ENCODE measurements at regions of chr19 and their contacts with region 1.

Region 1: DNA sequence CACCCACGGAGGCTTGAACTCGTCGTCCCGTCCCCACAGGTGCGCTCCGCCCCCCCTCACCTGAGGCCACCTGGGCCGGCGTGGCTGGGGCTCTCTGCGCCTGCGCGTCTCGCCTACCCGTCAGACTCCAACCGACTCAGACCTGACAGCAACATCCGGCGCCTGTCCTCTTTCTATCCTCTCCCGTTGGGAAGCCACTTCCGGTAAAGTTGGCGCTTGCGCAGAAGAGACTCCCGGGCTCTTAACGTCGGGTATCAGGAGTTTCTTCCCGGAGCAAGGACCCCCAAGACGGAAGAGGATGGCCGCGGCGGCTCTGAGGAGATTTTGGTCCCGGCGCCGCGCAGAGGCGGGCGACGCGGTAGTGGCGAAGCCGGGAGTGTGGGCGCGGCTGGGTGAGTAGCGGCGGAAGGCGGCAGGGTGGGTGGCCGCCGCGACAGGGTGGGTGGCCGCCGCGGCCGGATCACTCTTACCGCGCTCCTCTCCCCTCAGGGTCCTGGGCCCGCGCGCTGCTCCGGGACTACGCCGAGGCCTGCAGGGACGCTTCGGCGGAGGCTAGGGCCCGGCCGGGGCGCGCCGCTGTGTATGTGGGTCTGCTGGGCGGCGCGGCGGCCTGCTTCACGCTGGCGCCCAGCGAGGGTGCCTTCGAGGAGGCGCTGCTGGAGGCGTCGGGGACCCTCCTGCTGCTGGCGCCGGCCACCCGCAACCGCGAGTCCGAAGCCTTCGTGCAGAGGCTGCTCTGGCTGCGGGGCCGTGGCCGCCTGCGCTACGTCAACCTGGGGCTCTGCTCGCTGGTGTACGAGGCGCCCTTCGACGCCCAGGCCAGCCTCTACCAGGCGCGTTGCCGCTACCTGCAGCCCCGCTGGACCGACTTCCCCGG is at the starts of genes TIMM29 and YIPF2:
- DNase-seq: peak; percentile 92
- H3K4me3 Mint-ChIP-seq: peak within 1 kb of the TSS; percentile 94
- H3K27ac Mint-ChIP-seq: peak within 1 kb of the TSS; percentile 85
- H3K4me1 Mint-ChIP-seq: peaks cover 11% of the 10 kb centered on the region
- H3K27me3 Mint-ChIP-seq: no peaks in the 10 kb centered on the region
- total RNA-seq, gene TIMM29: 22.6 and 22.7 TPM in 2 replicates
- total RNA-seq, gene YIPF2: 28.8 and 29.5 TPM in 2 replicates

Region 2: DNA sequence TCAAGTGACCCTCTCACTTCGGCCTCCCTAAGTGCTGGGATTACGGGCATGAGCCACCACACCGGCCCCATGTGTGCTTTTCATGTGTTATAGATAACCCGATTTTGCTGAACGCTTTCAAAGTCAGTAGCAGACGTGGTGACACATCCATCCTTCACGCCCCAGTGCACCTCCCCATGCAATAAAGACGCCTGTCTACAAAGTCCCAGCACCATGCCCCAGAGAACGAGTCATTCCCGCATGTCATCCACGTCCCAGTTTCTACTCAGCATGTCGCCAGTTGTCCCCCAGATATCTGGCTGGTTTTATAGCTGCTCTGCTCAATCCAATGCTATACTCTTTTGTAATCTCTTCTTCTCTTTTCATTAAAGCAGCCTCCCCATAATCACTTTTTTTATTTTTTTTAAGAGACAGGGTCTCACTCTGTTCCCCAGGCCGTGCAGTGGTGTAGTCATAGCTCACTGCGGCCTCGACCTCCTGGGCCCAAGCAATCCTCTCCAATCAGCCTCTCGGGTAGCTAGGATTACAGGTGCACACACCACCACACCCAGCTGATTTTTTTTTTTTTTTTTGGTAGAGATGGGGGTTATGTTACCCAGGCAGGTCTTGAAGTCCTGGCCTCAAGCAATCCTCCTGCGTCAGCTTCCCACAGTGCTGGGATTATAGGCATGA is 168.4 kb before region 1 on chr19:
- intact Hi-C with region 1: loop called (anchors 1 kb)
- DNase-seq: no peak
- H3K4me3 Mint-ChIP-seq: peak overlapping the region; percentile 66
- H3K27ac Mint-ChIP-seq: peak overlapping the region; percentile 86
- H3K4me1 Mint-ChIP-seq: peaks cover 78% of the 10 kb centered on the region
- H3K27me3 Mint-ChIP-seq: no peaks in the 10 kb centered on the region

Region 3: GRCh38 chr19:10835754-10836477 is 92.8 kb before region 1 on chr19 and contains the start of gene TMED1:
- intact Hi-C with region 1: loop called (anchors 1 kb)
- DNase-seq: peak; percentile 93
- H3K4me3 Mint-ChIP-seq: peak within 1 kb of the TSS; percentile 92
- H3K27ac Mint-ChIP-seq: peak within 1 kb of the TSS; percentile 99
- H3K4me1 Mint-ChIP-seq: peaks cover 15% of the 10 kb centered on the region
- H3K27me3 Mint-ChIP-seq: peaks cover 4% of the 10 kb centered on the region
- total RNA-seq, gene TMED1: 19.8 and 21.0 TPM in 2 replicates

Region 4: GRCh38 chr19:10870955-10871603 is 57.7 kb before region 1 on chr19 and contains the start of gene CARM1:
- intact Hi-C with region 1: loop called (anchors 1 kb)
- DNase-seq: peak; percentile 98
- H3K4me3 Mint-ChIP-seq: peak within 1 kb of the TSS; percentile 88
- H3K27ac Mint-ChIP-seq: peak within 1 kb of the TSS; percentile 93
- H3K4me1 Mint-ChIP-seq: peaks cover 37% of the 10 kb centered on the region
- H3K27me3 Mint-ChIP-seq: no peaks in the 10 kb centered on the region
- total RNA-seq, gene CARM1: 85.9 and 88.0 TPM in 2 replicates

Region 5: GRCh38 chr19:10878253-10878652 is 50.5 kb before region 1 on chr19:
- intact Hi-C with region 1: loop called (anchors 2 kb)
- DNase-seq: no peak
- H3K4me3 Mint-ChIP-seq: no peak overlapping the region
- H3K27ac Mint-ChIP-seq: peak overlapping the region; percentile 97
- H3K4me1 Mint-ChIP-seq: peaks cover 41% of the 10 kb centered on the region
- H3K27me3 Mint-ChIP-seq: no peaks in the 10 kb centered on the region

Region 6: DNA sequence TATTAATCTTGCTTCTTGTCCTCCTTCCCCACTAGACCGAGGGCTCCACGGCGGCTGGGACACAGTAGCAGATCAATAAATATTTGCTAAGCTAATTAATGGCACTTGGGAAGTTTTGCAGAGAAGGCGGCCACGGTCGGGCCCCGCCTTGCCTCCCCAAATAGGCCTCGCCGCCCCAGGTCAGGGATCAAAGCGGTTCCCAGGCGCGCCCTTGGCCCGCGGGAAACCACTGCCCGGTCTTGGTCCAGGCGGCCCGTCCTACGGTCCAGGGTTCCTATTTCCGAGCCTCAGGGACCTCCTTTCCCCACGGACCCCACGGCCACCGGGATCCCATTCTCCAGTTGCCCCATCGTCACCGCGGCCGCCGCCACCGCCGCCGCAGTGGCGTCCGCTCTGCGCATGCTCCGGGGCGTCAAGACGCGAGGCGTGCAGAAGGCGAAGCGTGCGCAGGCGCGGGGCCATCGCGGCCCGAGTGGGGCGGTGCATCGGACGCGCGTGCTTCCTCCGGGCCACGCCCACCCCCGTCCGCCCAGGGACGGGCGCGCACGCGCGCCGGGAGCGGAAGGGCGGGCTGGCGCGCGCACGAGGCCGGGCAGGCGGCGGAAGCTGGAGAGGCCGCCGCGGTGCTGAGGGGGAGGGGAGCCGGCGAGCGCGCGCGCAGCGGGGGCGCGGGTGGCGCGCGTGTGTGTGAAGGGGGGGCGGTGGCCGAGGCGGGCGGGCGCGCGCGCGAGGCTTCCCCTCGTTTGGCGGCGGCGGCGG is 31.7 kb after region 1 on chr19 and contains the start of gene SMARCA4:
- intact Hi-C with region 1: loop called (anchors 1 kb)
- DNase-seq: peak; percentile 99
- H3K4me3 Mint-ChIP-seq: peak within 1 kb of the TSS; percentile 89
- H3K27ac Mint-ChIP-seq: peak within 1 kb of the TSS; percentile 87
- H3K4me1 Mint-ChIP-seq: peaks cover 39% of the 10 kb centered on the region
- H3K27me3 Mint-ChIP-seq: peaks cover under 1% of the 10 kb centered on the region
- total RNA-seq, gene SMARCA4: 177 and 178 TPM in 2 replicates